IMR-90 (cell line): ENCODE measurements at regions of chr19 and their contacts with region 1.

Region 1: DNA sequence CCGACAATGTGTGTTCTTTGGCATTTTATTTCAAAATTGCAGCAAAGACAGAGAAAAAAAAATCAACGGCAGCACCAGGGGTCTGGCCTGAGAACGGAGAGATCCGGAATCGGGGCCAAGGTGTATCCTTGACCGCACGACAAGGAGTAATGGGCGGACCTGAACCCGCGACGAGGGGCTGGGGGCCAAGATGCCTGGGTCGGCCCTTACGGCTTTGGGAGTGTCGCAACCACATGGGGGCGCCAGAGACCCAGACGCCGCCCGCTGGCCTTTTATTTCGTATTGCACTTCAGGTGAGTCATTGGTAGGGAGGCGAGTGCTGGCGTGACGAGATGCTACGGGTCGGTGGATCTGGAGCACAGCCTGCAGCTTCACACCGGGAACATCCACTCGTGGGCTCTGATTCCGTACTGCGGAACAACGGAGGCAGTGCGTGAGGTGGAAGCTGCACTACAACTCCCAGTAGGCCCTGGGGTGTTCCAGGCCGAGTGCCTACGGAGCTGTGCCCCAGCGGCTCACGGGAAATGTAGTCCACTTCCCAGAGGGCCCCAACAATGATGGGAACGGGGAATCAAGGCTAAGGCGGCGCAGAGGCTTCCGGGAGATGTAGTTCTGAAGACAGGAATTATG is 15.7 kb downstream of the BCAT2 start:
- DNase-seq: peak; percentile 92
- ATAC-seq: peak; percentile 100
- H3K4me3 ChIP-seq: peak overlapping the region; percentile 43
- H3K27ac ChIP-seq: peak overlapping the region; percentile 52
- H3K4me1 ChIP-seq: peaks cover 10% of the 10 kb centered on the region
- H3K27me3 ChIP-seq: no peaks in the 10 kb centered on the region
- CTCF ChIP-seq: peak; percentile 94
- POLR2A ChIP-seq: no peak
- RAD21 ChIP-seq: peak; percentile 85

Region 2: GRCh38 chr19:48624067-48624594 is 171.0 kb before region 1 on chr19:
- CTCF ChIA-PET with region 1: no interaction called
- POLR2A ChIA-PET with region 1: no interaction called
- dilution Hi-C with region 1: no loop called
- in situ Hi-C with region 1: no loop called
- intact Hi-C with region 1: no loop called
- DNase-seq: peak; percentile 97
- ATAC-seq: peak; percentile 89
- H3K4me3 ChIP-seq: peak overlapping the region; percentile 49
- H3K27ac ChIP-seq: peak overlapping the region; percentile 84
- H3K4me1 ChIP-seq: peaks cover 7% of the 10 kb centered on the region
- H3K27me3 ChIP-seq: no peaks in the 10 kb centered on the region
- CTCF ChIP-seq: no peak
- POLR2A ChIP-seq: no peak
- RAD21 ChIP-seq: no peak

Region 3: GRCh38 chr19:48713864-48714758 is 81.1 kb before region 1 on chr19:
- CTCF ChIA-PET with region 1: no interaction called
- POLR2A ChIA-PET with region 1: no interaction called
- dilution Hi-C with region 1: no loop called
- in situ Hi-C with region 1: no loop called
- intact Hi-C with region 1: no loop called
- DNase-seq: peak; percentile 98
- ATAC-seq: peak; percentile 93
- H3K4me3 ChIP-seq: peak overlapping the region; percentile 61
- H3K27ac ChIP-seq: peak overlapping the region; percentile 86
- H3K4me1 ChIP-seq: peaks cover 15% of the 10 kb centered on the region
- H3K27me3 ChIP-seq: no peaks in the 10 kb centered on the region
- CTCF ChIP-seq: no peak
- POLR2A ChIP-seq: no peak
- RAD21 ChIP-seq: no peak

Region 4: DNA sequence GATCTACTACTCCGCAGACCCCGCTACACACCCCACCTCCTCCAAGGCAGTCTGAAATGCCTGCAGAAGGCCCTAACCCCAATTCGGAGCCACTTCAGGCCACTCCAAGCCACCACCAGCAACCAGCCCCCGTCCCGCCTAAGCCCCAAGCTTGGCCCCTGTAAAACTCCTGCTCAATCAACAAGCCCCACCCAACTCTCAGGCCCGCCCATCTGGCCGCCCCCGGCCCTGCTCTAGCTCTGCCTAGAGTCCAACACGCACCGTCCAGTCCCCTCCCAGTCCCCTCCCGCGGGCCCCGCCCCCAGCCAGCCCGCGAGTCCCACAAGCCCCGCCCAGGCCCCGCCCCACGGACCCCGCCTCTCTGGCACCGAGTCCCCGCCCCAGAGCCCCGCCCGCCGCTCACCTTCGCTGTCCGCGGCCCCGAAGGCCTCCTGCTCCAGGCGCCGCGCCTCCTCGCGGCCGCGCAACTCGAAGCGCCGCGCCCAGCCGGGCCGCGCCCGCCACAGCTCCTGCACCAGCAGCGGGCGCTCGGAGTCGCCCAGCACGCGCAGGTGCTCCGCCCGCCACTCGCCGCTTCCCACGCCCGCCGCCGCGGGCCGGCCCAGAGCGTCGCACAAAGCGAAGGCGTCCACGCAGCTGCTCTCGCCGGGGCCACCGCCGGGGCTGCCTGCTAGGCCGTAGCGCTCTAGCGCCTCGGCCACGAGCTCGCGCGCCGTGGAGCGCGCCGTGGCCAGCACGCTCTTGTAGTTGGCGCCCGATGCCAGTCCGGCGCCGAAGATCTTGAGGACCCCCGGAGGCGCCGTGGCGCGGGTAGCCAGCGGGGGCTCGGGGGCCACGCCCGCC is 56.4 kb before region 1 on chr19:
- CTCF ChIA-PET with region 1: no interaction called
- POLR2A ChIA-PET with region 1: no interaction called
- dilution Hi-C with region 1: no loop called
- in situ Hi-C with region 1: no loop called
- intact Hi-C with region 1: no loop called
- DNase-seq: peak; percentile 65
- ATAC-seq: peak; percentile 96
- H3K4me3 ChIP-seq: peak overlapping the region; percentile 57
- H3K27ac ChIP-seq: no peak overlapping the region; the same call in 1 of the 2 replicates
- H3K4me1 ChIP-seq: peaks cover 5% of the 10 kb centered on the region
- H3K27me3 ChIP-seq: peaks cover 26% of the 10 kb centered on the region
- CTCF ChIP-seq: peak; percentile 44
- POLR2A ChIP-seq: no peak
- RAD21 ChIP-seq: peak; percentile 44

Region 5: DNA sequence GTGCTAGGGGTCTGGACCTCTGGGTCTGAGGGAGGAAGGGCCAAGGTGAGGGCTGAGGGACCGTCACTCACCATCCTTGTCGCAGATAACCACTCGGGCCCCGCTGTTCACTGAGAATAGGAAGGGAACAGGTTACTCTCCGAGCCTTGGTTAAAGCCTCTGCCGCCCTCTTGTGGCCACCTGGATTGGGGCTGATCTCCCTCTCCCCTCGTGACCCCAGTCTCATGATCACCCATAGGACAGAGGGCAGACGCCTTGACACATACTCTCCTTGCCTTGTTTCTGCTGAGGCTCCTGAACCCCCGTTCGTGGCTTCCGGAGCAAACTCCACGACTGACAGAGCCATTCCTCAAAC is 40.5 kb after region 1 on chr19:
- CTCF ChIA-PET with region 1: interaction called, 14 read pairs
- POLR2A ChIA-PET with region 1: no interaction called
- dilution Hi-C with region 1: no loop called
- in situ Hi-C with region 1: loop called (anchors 5 kb)
- intact Hi-C with region 1: loop called (anchors 1 kb)
- DNase-seq: peak; percentile 71
- ATAC-seq: peak; percentile 78
- H3K4me3 ChIP-seq: peak overlapping the region; percentile 25
- H3K27ac ChIP-seq: peak overlapping the region; percentile 12; the same call in 1 of the 2 replicates
- H3K4me1 ChIP-seq: peaks cover 12% of the 10 kb centered on the region
- H3K27me3 ChIP-seq: no peaks in the 10 kb centered on the region
- CTCF ChIP-seq: peak; percentile 89
- POLR2A ChIP-seq: no peak
- RAD21 ChIP-seq: peak; percentile 87

Region 6: GRCh38 chr19:48842789-48843162 is 47.6 kb after region 1 on chr19:
- CTCF ChIA-PET with region 1: interaction called, 7 read pairs
- POLR2A ChIA-PET with region 1: no interaction called
- dilution Hi-C with region 1: no loop called
- in situ Hi-C with region 1: loop called (anchors 5 kb)
- intact Hi-C with region 1: loop called (anchors 1 kb)
- DNase-seq: peak; percentile 48
- ATAC-seq: peak; percentile 79
- H3K4me3 ChIP-seq: no peak overlapping the region
- H3K27ac ChIP-seq: no peak overlapping the region
- H3K4me1 ChIP-seq: no peaks in the 10 kb centered on the region
- H3K27me3 ChIP-seq: no peaks in the 10 kb centered on the region
- CTCF ChIP-seq: peak; percentile 69
- POLR2A ChIP-seq: no peak
- RAD21 ChIP-seq: peak; percentile 64

Region 7: DNA sequence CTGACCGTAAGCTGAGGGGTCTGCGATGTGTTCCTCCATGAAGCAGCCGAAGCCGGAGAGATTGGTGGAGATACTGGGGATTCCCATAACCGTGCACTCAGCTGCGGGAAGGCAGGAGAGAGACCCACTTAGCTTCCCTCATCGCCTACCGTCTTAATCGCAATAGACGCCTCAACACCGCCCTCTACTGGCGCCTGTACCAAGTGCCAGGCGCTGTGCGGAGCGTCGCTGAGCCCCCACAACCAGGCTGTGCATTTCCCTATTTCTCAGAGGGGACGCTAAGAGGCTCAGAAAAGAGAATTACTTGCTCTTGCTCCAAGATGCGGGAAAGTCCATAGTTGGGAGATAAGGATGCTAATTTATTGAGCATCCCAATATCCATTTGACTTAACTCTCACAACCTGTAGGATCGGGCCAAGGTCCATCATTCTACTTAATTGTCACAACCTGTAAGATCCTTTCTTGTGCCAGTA is 175.8 kb after region 1 on chr19:
- CTCF ChIA-PET with region 1: interaction called, 6 read pairs
- POLR2A ChIA-PET with region 1: interaction called, 3 read pairs
- dilution Hi-C with region 1: no loop called
- in situ Hi-C with region 1: loop called (anchors 5 kb)
- intact Hi-C with region 1: loop called (anchors 2 kb)
- DNase-seq: peak; percentile 77
- ATAC-seq: peak; percentile 67
- H3K4me3 ChIP-seq: no peak overlapping the region
- H3K27ac ChIP-seq: no peak overlapping the region
- H3K4me1 ChIP-seq: no peaks in the 10 kb centered on the region; the same call in 1 of the 2 replicates
- H3K27me3 ChIP-seq: no peaks in the 10 kb centered on the region
- CTCF ChIP-seq: peak; percentile 92
- POLR2A ChIP-seq: peak; percentile 41; the same call in 1 of the 2 replicates
- RAD21 ChIP-seq: peak; percentile 86